ENCODE measurements at regions of chr17 and their contacts with region 1.

Region 1: GRCh38 chr17:38509008-38509771 is 80.9 kb downstream of the ARHGAP23 start:
- DNase-seq: peak; percentile 76
- H3K4me3 ChIP-seq: peak overlapping the region in 2 of 3 experiments; percentile 12 to 13
- H3K27ac ChIP-seq: peak overlapping the region; percentile 10
- H3K4me1 ChIP-seq: peaks cover 13% of the 10 kb centered on the region
- H3K27me3 ChIP-seq: no peaks in the 10 kb centered on the region
- CTCF ChIP-seq: peak; percentile 93 to 95
- POLR2A ChIP-seq: peak; percentile 76

Region 2: DNA sequence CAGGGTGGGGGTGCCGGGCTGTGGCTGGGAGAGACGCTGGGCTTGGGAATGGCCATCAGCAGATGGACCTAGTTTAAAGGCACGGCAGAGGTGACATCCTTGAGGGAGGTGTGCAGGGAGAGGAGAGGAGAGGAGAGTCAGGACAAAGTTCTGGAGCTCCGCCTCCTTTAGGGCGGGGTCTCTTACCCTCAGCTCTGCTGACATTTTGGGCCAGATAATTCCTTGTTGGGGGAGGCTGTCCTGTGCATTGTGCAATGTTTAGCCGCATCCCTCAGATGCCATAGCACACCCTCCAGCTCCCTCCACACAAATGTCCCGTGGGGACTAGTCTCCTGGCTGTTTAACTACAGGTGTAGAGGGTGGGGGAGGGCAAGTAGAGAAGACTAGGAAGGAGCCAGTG is 32.6 kb before region 1 on chr17:
- CTCF ChIA-PET with region 1: no interaction called
- POLR2A ChIA-PET with region 1: no interaction called
- dilution Hi-C with region 1: no loop called
- intact Hi-C with region 1: no loop called
- DNase-seq: no peak
- H3K4me3 ChIP-seq: no peak overlapping the region
- H3K27ac ChIP-seq: no peak overlapping the region
- H3K4me1 ChIP-seq: peaks cover 10% of the 10 kb centered on the region
- H3K27me3 ChIP-seq: no peaks in the 10 kb centered on the region
- CTCF ChIP-seq: no peak
- POLR2A ChIP-seq: no peak

Region 3: GRCh38 chr17:38533866-38534497 is 24.8 kb after region 1 on chr17:
- CTCF ChIA-PET with region 1: interaction called, 13 read pairs
- POLR2A ChIA-PET with region 1: no interaction called
- dilution Hi-C with region 1: no loop called
- intact Hi-C with region 1: no loop called
- DNase-seq: no peak
- H3K4me3 ChIP-seq: no peak overlapping the region
- H3K27ac ChIP-seq: no peak overlapping the region
- H3K4me1 ChIP-seq: no peaks in the 10 kb centered on the region
- H3K27me3 ChIP-seq: peaks cover 0 to 3% of the 10 kb centered on the region in 2 experiments
- CTCF ChIP-seq: no peak
- POLR2A ChIP-seq: no peak

Region 4: DNA sequence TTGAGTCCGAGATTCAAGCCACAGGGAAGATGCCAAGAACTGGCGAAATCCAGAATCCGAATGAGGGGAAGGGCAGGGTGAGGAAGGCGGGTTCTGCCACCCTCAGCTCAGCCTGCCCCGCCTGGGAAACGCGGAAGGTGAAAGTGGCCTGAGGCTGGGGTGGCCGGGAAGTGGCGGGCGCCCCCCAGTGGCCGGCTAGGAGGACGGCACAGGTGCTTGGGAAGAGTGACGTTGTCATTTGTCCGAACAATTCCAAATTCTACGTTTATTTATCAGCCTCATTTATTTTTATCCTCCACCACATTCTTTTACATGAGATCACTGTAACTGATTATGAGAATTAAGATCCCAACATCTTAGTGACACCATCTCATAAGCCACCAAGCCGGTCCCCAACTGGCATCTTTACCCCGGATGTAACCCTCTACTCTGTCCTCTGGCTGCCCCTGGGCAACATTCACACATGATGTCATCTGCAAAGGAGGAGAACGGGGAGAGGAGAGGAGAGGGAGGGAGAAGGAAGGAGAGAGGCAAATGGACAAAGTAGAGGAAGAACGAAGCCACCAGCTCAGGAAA is 75.2 kb after region 1 on chr17:
- CTCF ChIA-PET with region 1: interaction called, 10 read pairs
- POLR2A ChIA-PET with region 1: no interaction called
- dilution Hi-C with region 1: no loop called
- intact Hi-C with region 1: loop called (anchors 5 kb)
- DNase-seq: peak; percentile 28
- H3K4me3 ChIP-seq: no peak overlapping the region
- H3K27ac ChIP-seq: no peak overlapping the region
- H3K4me1 ChIP-seq: no peaks in the 10 kb centered on the region
- H3K27me3 ChIP-seq: peaks cover 24 to 26% of the 10 kb centered on the region in 2 experiments
- CTCF ChIP-seq: peak; percentile 93 to 98
- POLR2A ChIP-seq: no peak